ENCODE measurements at regions of chr14 and their contacts with region 1.

Region 1: DNA sequence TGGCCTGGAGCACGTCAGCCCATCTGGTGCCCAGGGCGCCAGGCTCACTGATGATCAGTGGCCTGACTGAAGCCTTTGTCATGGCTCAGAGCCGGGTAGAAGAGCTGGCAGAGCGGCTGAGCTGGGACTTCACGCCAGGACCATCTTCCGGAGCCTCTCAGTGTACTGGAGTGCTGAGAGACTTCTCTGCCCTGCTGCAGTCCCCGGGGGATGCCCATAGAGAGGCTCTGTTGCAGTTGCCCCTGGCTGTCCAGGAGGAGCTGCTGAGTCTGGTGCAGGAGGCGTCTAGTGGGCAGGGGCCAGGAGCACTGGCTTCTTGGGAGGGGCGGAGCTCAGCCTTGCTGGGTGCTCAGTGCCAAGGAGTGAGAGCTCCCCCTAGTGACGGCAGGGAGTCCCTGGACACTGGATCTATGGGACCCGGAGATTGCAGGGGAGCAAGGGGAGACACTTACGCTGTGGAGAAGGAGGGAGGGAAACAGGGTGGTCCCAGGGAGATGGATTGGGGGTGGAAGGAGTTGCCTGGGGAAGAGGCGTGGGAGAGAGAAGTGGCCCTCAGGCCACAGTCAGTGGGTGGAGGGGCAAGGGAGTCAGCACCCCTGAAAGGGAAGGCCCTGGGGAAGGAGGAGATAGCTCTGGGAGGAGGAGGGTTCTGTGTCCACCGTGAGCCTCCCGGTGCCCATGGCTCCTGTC is 2.0 kb downstream of the KHNYN start:
- DNase-seq: peak; percentile 56
- H3K4me3 ChIP-seq: peak overlapping the region in 3 of 4 donors; percentile 79 to 88 (median 80)
- H3K27ac ChIP-seq: peak overlapping the region; percentile 93 to 99 (median 98)
- H3K4me1 ChIP-seq: peaks cover 27 to 77% (median 43%) of the 10 kb centered on the region in 3 donors
- H3K27me3 ChIP-seq: no peaks in the 10 kb centered on the region
- CTCF ChIP-seq: peak; percentile 85 to 96 (median 92)
- POLR2A ChIP-seq: no peak

Region 2: DNA sequence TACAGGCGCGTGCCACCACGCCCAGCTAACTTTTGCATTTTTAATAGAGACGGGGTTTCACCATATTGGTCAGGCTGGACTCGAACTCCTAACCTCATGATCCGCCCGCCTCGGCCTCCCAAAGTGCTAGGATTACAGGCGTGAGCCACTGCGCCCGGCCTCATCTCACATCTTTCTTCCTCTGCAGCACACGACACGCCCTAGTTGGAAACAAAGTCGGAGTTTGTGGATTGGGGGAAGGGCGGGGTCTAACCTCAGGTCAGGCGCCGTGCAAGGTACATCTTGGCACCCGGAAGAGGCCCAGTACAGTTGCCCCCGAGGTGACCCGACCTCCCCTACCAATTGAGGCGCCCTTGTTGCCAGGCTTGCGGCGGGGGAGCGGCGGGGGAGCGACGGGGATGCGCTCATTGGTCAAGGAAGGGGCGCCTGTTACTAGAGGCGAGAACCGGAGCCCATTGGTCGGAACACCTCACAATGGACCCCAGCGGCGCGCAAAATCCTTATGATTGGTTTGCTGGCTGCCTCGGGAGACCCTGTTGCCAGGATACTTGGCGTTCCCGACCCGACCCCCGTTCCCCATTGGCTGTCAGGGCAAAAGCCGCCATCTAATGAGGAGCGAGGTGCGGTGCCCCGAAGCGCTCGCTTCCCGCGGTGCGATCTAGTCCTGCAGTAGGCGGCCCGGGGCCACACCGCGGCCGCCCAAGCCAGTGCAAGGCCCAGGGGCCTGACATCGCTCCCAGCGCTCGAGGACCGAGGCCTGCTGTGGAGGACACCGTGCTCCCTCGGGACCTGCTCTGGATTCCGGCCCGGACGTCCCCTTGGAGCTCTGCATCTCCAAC is 260.1 kb before region 1 on chr14 and contains the start of gene REC8:
- intact Hi-C with region 1: no loop called
- DNase-seq: no peak
- H3K4me3 ChIP-seq: peak within 1 kb of the TSS in 3 of 4 donors; percentile 27 to 42 (median 34)
- H3K27ac ChIP-seq: peak within 1 kb of the TSS in 3 of 4 donors; percentile 30 to 69 (median 50)
- H3K4me1 ChIP-seq: peaks cover 0 to 24% (median 5%) of the 10 kb centered on the region in 3 donors
- H3K27me3 ChIP-seq: no peaks in the 10 kb centered on the region
- CTCF ChIP-seq: no peak
- POLR2A ChIP-seq: no peak
- total RNA-seq, gene REC8: 0.47 to 7.4 (median 3.0) TPM

Region 3: GRCh38 chr14:24332268-24332993 is 99.3 kb before region 1 on chr14:
- intact Hi-C with region 1: loop called (anchors 5 kb)
- DNase-seq: no peak
- H3K4me3 ChIP-seq: peak overlapping the region; percentile 8 to 70 (median 34)
- H3K27ac ChIP-seq: peak overlapping the region in 2 of 4 donors; percentile 12 to 15
- H3K4me1 ChIP-seq: peaks cover 22 to 88% (median 34%) of the 10 kb centered on the region in 3 donors
- H3K27me3 ChIP-seq: peaks cover 0 to 39% (median 6%) of the 10 kb centered on the region in 4 donors
- CTCF ChIP-seq: peak; percentile 61 to 85 (median 76)
- POLR2A ChIP-seq: no peak

Region 4: DNA sequence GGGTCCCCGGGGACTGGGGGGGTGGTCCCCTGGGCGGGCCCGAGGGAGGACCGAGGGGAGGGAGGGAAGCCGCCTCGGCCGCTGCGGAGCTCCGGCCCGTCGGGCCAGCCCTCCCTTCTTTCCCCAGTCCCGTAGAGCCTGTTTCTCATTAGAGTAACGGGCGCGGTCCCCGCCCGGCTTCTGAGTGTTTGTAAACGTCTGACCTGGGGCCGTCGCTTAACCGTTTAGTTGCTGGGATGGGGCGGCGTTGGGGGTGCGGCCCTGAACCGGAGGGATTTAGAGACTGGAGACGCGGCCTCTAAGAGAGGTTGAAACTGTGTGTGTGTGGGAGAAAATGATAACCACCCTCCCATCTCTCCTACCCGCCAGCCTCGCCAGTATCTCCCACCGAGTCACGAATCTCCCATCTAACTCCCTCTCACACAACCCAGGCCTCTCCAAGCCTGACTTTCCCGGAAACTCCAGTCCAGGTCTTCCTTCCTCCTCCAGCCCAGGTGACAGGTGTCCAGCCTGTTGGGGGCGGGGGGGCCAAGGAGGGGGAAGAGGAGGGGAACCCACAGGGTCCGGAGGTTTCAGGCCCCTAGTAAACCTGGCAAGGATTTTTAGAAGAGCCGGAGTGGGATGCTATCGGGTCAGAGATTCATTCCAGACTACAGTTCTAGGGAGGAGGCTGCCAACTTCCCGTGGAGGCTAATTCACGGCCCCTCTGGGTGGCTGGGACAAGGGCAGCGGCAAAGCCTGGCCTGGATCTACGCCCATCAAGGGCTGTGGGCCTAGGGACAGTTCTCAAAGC is 64.8 kb before region 1 on chr14:
- intact Hi-C with region 1: loop called (anchors 5 kb)
- DNase-seq: peak; percentile 30
- H3K4me3 ChIP-seq: peak overlapping the region; percentile 33 to 74 (median 62)
- H3K27ac ChIP-seq: peak overlapping the region; percentile 81 to 96 (median 92)
- H3K4me1 ChIP-seq: peaks cover 24 to 72% (median 24%) of the 10 kb centered on the region in 3 donors
- H3K27me3 ChIP-seq: peaks cover 0 to 19% (median 0%) of the 10 kb centered on the region in 4 donors
- CTCF ChIP-seq: no peak
- POLR2A ChIP-seq: peak in 1 of 4 donors; percentile 62

Region 5: GRCh38 chr14:24556756-24557155 is 125.0 kb after region 1 on chr14:
- intact Hi-C with region 1: no loop called
- DNase-seq: no peak
- H3K4me3 ChIP-seq: no peak overlapping the region
- H3K27ac ChIP-seq: no peak overlapping the region
- H3K4me1 ChIP-seq: no peaks in the 10 kb centered on the region
- H3K27me3 ChIP-seq: no peaks in the 10 kb centered on the region
- CTCF ChIP-seq: no peak
- POLR2A ChIP-seq: no peak

Measured in esophagus squamous epithelium (tissue), 5 donors.